ENCODE measurements at regions of chr11 and their contacts with region 1.

Region 1: GRCh38 chr11:75814686-75815344 is at the start of gene UVRAG:
- DNase-seq: peak; percentile 99 to 100 (median 99)
- H3K4me3 ChIP-seq: peak within 1 kb of the TSS; percentile 65 to 68
- H3K4me3 Mint-ChIP-seq: peak within 1 kb of the TSS in 4 of 8 donors; percentile 92 to 98 (median 98)
- H3K27ac ChIP-seq: peak within 1 kb of the TSS; percentile 85
- H3K27ac Mint-ChIP-seq: peak within 1 kb of the TSS in 6 of 7 donors; percentile 97 to 99 (median 98)
- H3K4me1 ChIP-seq: peaks cover 33% of the 10 kb centered on the region
- H3K4me1 Mint-ChIP-seq: peaks cover 10 to 34% (median 16%) of the 10 kb centered on the region in 4 donors
- H3K27me3 ChIP-seq: no peaks in the 10 kb centered on the region
- H3K27me3 Mint-ChIP-seq: no peaks in the 10 kb centered on the region
- total RNA-seq, gene UVRAG: 22.0 to 32.2 TPM

Region 2: GRCh38 chr11:75768112-75768908 is 46.5 kb before region 1 on chr11 and contains the start of gene DGAT2:
- CTCF ChIA-PET with region 1: no interaction called
- POLR2A ChIA-PET with region 1: interaction called, 3 read pairs
- intact Hi-C with region 1: loop called (anchors 2 kb)
- DNase-seq: peak; percentile 50 to 72 (median 66)
- H3K4me3 ChIP-seq: peak within 1 kb of the TSS; percentile 42 to 58
- H3K4me3 Mint-ChIP-seq: peak within 1 kb of the TSS; percentile 70 to 87 (median 76)
- H3K27ac ChIP-seq: no peak within 1 kb of the TSS
- H3K27ac Mint-ChIP-seq: peak within 1 kb of the TSS in 5 of 7 donors; percentile 45 to 74 (median 67)
- H3K4me1 ChIP-seq: peaks cover 21% of the 10 kb centered on the region
- H3K4me1 Mint-ChIP-seq: peaks cover 2 to 19% (median 9%) of the 10 kb centered on the region in 4 donors
- H3K27me3 ChIP-seq: peaks cover 3% of the 10 kb centered on the region
- H3K27me3 Mint-ChIP-seq: peaks cover 3 to 9% of the 10 kb centered on the region in 2 donors
- total RNA-seq, gene DGAT2: 0.17 to 0.35 TPM

Region 3: GRCh38 chr11:75867775-75868374 is 53.1 kb after region 1 on chr11:
- CTCF ChIA-PET with region 1: interaction called, 10 read pairs
- POLR2A ChIA-PET with region 1: interaction called, 5 read pairs
- intact Hi-C with region 1: loop called (anchors 5 kb)
- DNase-seq: peak in 4 of 5 donors; percentile 47 to 53 (median 48)
- H3K4me3 ChIP-seq: no peak overlapping the region
- H3K4me3 Mint-ChIP-seq: no peak overlapping the region
- H3K27ac ChIP-seq: no peak overlapping the region
- H3K27ac Mint-ChIP-seq: peak overlapping the region in 2 of 7 donors; percentile 12 to 44
- H3K4me1 ChIP-seq: no peaks in the 10 kb centered on the region
- H3K4me1 Mint-ChIP-seq: peaks cover 0 to 7% (median 5%) of the 10 kb centered on the region in 4 donors
- H3K27me3 ChIP-seq: no peaks in the 10 kb centered on the region
- H3K27me3 Mint-ChIP-seq: no peaks in the 10 kb centered on the region

Region 4: DNA sequence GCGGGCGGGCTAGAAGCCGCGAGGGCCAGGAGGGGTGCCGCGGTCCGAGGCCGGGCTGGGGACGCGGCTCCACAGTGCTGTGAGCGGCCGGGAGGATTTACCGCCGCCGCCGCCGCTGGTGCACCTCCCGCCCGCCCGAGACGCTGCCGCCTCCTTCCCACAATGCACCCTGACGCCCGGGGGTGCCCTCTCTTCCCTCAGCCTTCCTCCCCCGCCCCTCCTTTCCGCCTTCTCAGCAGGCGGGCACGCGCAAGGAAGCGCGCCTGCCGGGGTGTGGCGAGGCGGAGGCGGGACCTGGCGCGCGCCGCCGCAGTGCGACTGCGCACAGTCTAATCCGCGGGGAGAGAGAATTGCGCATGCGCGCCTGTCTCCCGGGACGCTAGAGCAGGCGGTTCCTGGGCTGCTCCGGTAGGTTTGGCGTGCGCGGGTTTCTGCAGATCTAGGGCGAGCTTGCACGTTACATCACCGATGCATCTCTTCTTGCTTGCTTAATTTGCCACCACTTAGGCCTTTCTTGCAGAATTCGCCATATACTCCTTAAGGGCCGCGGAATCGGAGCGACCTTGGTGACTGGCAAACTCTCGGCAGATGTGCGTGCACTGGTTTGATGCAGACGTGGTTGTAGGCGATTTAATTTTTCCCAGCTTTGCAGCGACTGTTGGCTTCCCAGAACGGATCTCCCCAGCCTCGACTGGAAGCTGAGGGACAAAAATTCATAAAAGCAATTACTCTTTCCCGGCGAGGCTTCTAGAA is 566.3 kb after region 1 on chr11 and contains the starts of genes GVQW3 and THAP12:
- CTCF ChIA-PET with region 1: no interaction called
- POLR2A ChIA-PET with region 1: no interaction called
- intact Hi-C with region 1: loop called (anchors 1 kb)
- DNase-seq: peak; percentile 97 to 99 (median 98)
- H3K4me3 ChIP-seq: peak within 1 kb of the TSS; percentile 82 to 86
- H3K4me3 Mint-ChIP-seq: peak within 1 kb of the TSS; percentile 94 to 99 (median 98)
- H3K27ac ChIP-seq: peak within 1 kb of the TSS; percentile 68
- H3K27ac Mint-ChIP-seq: peak within 1 kb of the TSS; percentile 88 to 96 (median 95)
- H3K4me1 ChIP-seq: peaks cover 56% of the 10 kb centered on the region
- H3K4me1 Mint-ChIP-seq: peaks cover 41 to 68% (median 58%) of the 10 kb centered on the region in 4 donors
- H3K27me3 ChIP-seq: no peaks in the 10 kb centered on the region
- H3K27me3 Mint-ChIP-seq: no peaks in the 10 kb centered on the region
- total RNA-seq, gene GVQW3: 8.7 to 10.1 TPM
- total RNA-seq, gene THAP12: 53.7 to 57.3 TPM